ENCODE measurements at regions of chr7 and their contacts with region 1.

Region 1: DNA sequence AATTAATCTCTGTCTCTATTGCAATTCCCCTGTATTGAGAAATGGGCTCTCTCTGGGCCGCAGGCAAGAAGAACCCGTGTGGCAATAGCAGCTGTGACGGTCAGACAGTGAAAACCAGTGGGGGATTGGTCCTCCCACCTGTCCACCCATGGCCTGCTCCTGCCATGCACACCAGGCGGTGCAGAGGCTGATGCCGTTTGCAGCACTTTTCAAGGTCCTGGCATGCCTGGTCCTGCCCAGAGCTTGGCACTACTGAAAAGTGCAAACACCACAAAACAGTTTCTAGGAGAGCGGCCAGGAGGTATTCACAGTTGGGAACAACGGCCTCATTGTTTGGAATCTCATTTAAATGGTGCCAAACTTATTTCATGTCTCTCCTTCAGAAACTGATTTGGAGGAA is 41.5 kb downstream of the PSPH start:
- DNase-seq: peak; percentile 6 to 72 (median 54)
- H3K4me3 ChIP-seq: peak overlapping the region in 10 of 59 donors; percentile 3 to 50 (median 28)
- H3K27ac ChIP-seq: peak overlapping the region in 56 of 59 donors; percentile 1 to 92 (median 78)
- H3K27me3 ChIP-seq: no peaks in the 10 kb centered on the region
- CTCF ChIP-seq: peak in 8 of 56 donors; percentile 10 to 33 (median 18)

Region 2: GRCh38 chr7:55912748-55913158 is 96.9 kb before region 1 on chr7:
- intact Hi-C with region 1: no loop called
- DNase-seq: no peak
- H3K4me3 ChIP-seq: peak overlapping the region in 21 of 59 donors; percentile 4 to 41 (median 20)
- H3K27ac ChIP-seq: peak overlapping the region in 57 of 59 donors; percentile 33 to 97 (median 80)
- H3K27me3 ChIP-seq: no peaks in the 10 kb centered on the region
- CTCF ChIP-seq: peak in 1 of 56 donors; percentile 10

Region 3: DNA sequence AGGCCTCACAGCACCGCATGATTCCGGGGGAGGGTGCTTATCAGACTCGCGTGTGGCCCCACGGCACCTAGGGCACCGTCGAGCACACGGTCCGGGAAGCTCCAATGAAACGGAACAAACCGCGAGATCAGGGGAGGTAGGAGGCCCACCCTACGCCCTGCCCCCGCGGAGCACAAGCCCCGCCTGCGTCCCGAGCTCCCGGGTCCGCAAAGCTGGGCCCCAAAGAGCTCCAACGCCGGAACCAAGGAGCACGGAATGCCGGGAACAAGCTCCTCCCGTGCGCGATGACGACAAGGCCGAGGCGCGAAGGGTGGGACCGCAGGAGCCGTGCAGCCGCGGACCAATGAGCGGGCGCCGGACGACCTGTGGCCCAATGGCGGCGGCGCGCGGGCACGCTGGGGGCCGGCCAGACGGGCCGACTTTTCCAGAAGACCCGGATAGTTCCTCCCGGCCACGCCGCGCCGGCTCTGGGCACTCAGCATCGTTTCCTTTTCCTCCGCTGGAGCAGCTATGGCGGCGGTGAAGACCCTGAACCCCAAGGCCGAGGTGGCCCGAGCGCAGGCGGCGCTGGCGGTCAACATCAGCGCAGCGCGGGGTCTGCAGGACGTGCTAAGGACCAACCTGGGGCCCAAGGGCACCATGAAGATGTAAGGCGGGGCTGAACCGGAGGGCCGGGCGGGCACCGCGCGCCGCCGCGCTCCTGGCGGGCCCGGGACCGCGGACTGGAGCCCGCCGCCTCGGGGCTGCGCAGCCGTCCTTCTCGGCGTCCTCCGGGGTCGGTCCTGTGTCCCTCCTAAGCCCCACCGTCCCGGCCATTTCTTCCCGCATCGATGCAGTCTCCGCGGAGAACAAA is 41.9 kb after region 1 on chr7 and contains the starts of genes CCT6A and PSPH:
- intact Hi-C with region 1: loop called (anchors 2 to 5 kb)
- DNase-seq: peak; percentile 96 to 100 (median 98)
- H3K4me3 ChIP-seq: peak within 1 kb of the TSS; percentile 63 to 100 (median 91)
- H3K27ac ChIP-seq: peak within 1 kb of the TSS; percentile 19 to 98 (median 92)
- H3K27me3 ChIP-seq: no peaks in the 10 kb centered on the region
- CTCF ChIP-seq: peak in 35 of 56 donors; percentile 6 to 58 (median 22)
- total RNA-seq, gene CCT6A: 38.3 to 105 (median 76.0) TPM
- total RNA-seq, gene PSPH: 11.1 to 44.3 (median 20.0) TPM

Region 4: DNA sequence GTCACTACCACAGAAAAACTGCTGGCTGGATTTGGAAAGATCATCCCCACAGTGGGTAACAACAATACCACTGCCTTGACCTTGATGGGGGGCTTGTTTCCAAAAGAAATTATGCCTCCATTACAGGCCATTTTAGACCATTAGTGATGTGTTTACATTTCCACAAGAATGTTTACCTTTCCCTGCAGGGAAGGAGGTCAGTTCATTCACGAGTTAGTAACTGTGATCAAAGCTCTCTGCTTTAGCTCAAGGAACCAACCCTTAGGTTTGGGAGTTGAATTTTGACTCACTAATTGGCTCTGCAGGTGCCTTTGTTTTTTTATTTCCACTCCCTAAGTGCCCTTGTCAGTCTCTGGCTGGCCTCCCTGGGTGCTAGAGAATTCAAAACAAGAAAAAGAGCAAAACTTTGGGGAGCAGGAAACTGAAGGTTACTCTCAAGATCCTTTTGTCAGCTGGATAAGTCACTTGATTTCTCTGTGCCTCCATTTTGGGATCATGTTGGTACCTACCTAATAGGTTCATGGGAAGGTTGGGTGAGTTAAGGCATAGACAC is 147.6 kb after region 1 on chr7:
- intact Hi-C with region 1: no loop called
- DNase-seq: no peak
- H3K4me3 ChIP-seq: no peak overlapping the region
- H3K27ac ChIP-seq: no peak overlapping the region
- H3K27me3 ChIP-seq: peaks cover 0 to 25% (median 0%) of the 10 kb centered on the region in 45 donors
- CTCF ChIP-seq: no peak

Measured in dorsolateral prefrontal cortex (tissue), 120 donors.